CD14-positive monocyte (primary cell): ENCODE measurements at regions of chr12 and their contacts with region 1.

Region 1: DNA sequence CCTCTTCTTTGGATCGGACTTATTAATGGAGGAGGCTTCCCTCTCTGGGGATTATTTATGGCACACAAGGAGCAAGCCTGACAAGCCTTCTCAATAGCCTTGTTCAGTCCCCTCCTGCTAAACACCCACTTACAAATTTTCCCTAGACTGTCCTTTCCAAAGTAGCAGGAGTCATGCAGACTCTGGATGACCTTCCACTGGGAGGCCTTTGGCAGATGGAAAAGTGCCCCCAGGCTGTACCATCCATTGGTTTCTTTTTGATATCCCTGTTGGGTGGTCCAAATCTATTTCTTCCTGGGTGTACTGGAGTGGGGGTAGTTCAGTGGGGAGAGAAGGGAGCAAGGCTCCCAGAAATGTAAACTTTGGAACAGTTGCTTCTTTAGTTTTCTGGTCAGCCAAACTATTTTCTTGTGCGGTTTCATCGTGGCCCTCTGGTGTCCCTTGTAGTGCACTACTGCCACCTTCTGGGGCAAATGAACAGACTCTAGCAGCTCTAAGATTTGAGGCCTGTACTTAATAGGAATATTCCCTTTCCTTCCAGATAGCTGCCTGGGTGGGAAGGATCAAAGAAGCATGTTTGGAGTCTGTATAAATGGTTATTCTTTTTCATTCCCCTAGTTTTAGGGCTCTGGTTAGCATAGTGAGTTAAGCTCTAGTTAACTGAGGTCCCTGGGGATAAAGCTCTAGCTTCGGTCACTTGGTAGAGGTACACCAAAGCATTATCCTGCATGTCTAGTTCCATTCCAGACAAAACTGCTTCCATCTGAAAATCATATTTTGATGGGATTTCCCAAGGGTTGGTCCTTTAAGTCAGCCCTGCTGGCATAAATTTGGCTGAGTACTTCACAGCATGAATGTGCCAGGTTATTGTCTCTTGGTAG is 409.5 kb downstream of the SLC6A15 start:
- DNase-seq: no peak
- H3K4me3 ChIP-seq: no peak overlapping the region
- H3K4me3 Mint-ChIP-seq: no peak overlapping the region
- H3K27ac ChIP-seq: no peak overlapping the region
- H3K27ac Mint-ChIP-seq: no peak overlapping the region
- H3K4me1 ChIP-seq: peaks cover 0 to 2% of the 10 kb centered on the region in 2 donors
- H3K4me1 Mint-ChIP-seq: peaks cover 7% of the 10 kb centered on the region
- H3K27me3 ChIP-seq: no peaks in the 10 kb centered on the region
- H3K27me3 Mint-ChIP-seq: no peaks in the 10 kb centered on the region
- CTCF ChIP-seq: peak; percentile 40

Region 2: GRCh38 chr12:82527165-82527780 is 1975.9 kb before region 1 on chr12:
- intact Hi-C with region 1: loop called in 1 of 2 experiments (anchors 5 kb)
- DNase-seq: peak; percentile 2 to 23 (median 3)
- H3K4me3 ChIP-seq: no peak overlapping the region
- H3K4me3 Mint-ChIP-seq: no peak overlapping the region
- H3K27ac ChIP-seq: no peak overlapping the region
- H3K27ac Mint-ChIP-seq: no peak overlapping the region
- H3K4me1 ChIP-seq: no peaks in the 10 kb centered on the region
- H3K4me1 Mint-ChIP-seq: no peaks in the 10 kb centered on the region
- H3K27me3 ChIP-seq: no peaks in the 10 kb centered on the region
- H3K27me3 Mint-ChIP-seq: peaks cover 0 to 3% (median 0%) of the 10 kb centered on the region in 3 donors
- CTCF ChIP-seq: peak; percentile 90

Region 3: GRCh38 chr12:84046859-84047258 is 456.3 kb before region 1 on chr12:
- intact Hi-C with region 1: no loop called
- DNase-seq: no peak
- H3K4me3 ChIP-seq: no peak overlapping the region
- H3K4me3 Mint-ChIP-seq: no peak overlapping the region
- H3K27ac ChIP-seq: no peak overlapping the region
- H3K27ac Mint-ChIP-seq: no peak overlapping the region
- H3K4me1 ChIP-seq: no peaks in the 10 kb centered on the region
- H3K4me1 Mint-ChIP-seq: no peaks in the 10 kb centered on the region
- H3K27me3 ChIP-seq: no peaks in the 10 kb centered on the region
- H3K27me3 Mint-ChIP-seq: no peaks in the 10 kb centered on the region
- CTCF ChIP-seq: no peak